ENCODE measurements at regions of chr9 and their contacts with region 1.

Region 1: DNA sequence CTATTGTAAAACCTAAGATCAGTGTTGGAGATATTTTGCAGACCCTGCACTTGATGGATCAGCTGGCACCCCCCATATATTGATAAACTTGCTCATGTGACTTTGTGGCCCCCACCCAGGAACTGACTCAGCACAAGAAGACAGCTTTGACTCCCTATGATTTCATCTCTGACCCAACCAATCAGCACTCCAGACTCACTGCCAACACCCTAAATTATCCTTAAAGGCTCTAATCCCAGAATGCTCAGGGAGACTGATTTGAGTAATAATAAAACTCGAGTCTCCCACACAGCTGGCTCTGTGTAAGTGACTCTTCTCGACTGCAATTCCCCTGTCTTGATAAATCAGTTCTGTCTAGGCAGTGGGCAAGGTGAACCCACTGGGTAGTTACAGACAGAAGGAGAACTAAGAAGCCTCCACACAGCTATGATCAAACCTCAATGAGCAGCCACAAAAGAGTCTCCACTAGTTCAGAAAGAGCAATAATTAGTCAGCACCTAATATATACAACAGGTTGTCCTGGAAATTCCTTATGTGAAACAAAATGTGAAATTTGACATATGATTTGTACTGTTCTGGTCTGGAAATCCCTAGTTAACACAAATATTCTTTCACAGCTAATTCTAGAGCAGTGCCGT is 52.2 kb downstream of the ACTL7B start:
- DNase-seq: no peak
- ATAC-seq: no peak
- H3K4me3 ChIP-seq: no peak overlapping the region
- H3K27ac ChIP-seq: no peak overlapping the region
- H3K4me1 ChIP-seq: no peaks in the 10 kb centered on the region
- CTCF ChIP-seq: no peak
- EP300 ChIP-seq: no peak
- POLR2A ChIP-seq: no peak
- RAD21 ChIP-seq: no peak

Region 2: DNA sequence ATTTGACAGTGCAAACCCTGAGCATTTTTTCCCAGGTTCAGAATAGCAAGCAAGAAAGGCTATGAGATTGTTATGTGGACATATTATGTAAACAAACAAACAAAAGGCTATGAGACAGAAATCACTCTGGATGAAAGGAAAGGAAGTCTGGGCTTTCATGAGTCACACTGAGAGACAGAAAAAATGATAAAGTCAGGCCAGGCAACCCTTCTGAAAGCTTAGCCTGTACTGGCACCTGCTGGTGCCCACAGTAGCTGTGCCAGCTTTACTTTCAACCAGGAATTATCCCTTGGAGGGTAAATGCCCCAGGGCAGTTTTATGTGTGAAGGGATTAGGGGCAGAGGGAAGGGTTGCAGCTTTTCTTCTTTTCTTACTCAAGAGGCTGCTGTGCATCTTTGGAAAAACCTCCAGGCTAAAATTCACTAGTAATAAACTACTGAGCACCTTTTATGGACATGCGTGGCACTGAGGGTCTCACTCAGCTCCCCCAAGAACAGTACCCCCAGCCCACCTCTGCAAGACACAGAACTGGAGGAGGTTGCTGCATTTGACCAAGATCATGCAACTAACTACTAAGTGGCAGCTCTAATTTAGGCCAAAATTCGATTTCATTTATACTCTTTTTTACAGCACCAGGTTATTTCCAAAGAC is 10.5 kb after region 1 on chr9:
- CTCF ChIA-PET with region 1: interaction called, 13 read pairs
- POLR2A ChIA-PET with region 1: no interaction called
- DNase-seq: peak; percentile 57 to 63
- ATAC-seq: peak; percentile 92 to 97
- H3K4me3 ChIP-seq: no peak overlapping the region
- H3K27ac ChIP-seq: no peak overlapping the region
- H3K4me1 ChIP-seq: peaks cover 9% of the 10 kb centered on the region; the same call in 2 of the 3 replicates
- CTCF ChIP-seq: peak; percentile 68
- EP300 ChIP-seq: no peak
- POLR2A ChIP-seq: no peak
- RAD21 ChIP-seq: peak; percentile 78 to 92